GM10248 (cell line): ENCODE measurements at regions of chr10 and their contacts with region 1.

Region 1: DNA sequence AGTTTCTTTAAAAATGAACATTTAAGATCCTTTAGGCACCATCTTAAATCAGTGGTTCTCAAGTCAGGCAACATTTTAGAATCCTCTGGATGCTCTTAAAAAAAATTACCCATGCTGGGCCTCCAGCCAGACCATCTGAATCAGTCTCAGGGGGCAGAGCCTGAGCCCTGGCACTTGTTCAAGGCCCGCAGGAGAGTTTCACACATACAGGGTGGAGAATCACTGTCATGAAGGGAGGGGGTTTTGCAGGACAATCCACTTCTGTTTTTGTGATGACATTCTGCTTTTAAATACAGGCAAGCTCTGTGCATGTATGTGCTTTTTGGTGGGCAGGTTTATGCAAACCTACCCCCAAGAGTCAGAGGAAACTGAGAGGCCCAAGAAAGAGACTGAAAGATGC is 268.6 kb downstream of the SEC23IP start:
- DNase-seq: no peak
- CTCF ChIP-seq: no peak

Region 2: GRCh38 chr10:119421887-119422681 is 739.0 kb before region 1 on chr10:
- CTCF ChIA-PET with region 1: no interaction called
- POLR2A ChIA-PET with region 1: interaction called, 13 read pairs
- DNase-seq: no peak
- CTCF ChIP-seq: no peak

Region 3: DNA sequence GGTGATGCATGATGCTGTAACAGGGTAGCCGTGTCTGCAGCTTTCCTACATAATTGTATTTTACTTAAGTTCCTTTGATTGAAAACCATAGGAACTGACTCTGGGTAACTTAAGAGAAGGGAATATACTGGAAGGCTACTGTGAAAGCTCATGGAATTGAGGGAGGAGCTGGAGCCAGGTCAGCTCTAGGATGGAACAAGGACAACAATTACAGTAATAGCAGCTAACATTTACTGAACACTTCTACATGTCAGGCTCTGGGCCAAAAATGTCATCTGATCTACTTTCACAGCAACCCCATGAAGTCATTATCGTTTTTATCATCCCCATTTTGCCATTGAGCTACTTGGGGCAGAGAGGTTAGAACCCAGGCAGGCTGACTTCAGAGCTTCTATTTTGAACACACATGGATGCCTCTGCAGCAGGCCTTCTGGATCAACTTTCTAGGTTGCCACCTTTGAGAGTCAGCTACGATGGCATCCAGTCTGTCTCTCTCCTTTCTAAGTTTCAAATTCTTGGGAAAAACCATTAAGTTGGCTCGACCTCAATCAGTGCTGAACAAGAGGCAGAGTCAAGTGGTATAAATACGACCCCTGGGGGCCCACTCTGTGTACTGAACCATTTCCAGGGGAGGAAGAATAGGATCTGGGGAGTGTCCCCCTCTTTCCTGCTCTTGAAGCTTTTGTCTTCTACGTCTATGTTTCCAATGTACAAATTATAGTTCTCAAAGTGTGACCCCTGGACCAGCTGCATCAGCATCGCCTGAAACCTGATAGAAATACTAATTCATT is 23.6 kb after region 1 on chr10:
- CTCF ChIA-PET with region 1: no interaction called
- POLR2A ChIA-PET with region 1: no interaction called
- DNase-seq: no peak
- CTCF ChIP-seq: no peak